WTC11 (cell line): ENCODE measurements at regions of chr15 and their contacts with region 1.

Region 1: GRCh38 chr15:68650901-68651709 is 72.3 kb downstream of the CORO2B start:
- DNase-seq: peak; percentile 98
- ATAC-seq: peak; percentile 96
- H3K4me3 Mint-ChIP-seq: peak overlapping the region; percentile 53
- H3K27ac Mint-ChIP-seq: no peak overlapping the region; the same call in 1 of the 2 replicates
- H3K4me1 Mint-ChIP-seq: peaks cover 43% of the 10 kb centered on the region
- H3K27me3 Mint-ChIP-seq: no peaks in the 10 kb centered on the region
- CTCF ChIP-seq: peak; percentile 97

Region 2: GRCh38 chr15:68559345-68560310 is 91.5 kb before region 1 on chr15:
- CTCF ChIA-PET with region 1: interaction called, 51 read pairs
- POLR2A ChIA-PET with region 1: no interaction called
- DNase-seq: peak; percentile 89
- ATAC-seq: peak; percentile 85
- H3K4me3 Mint-ChIP-seq: peak overlapping the region; percentile 94
- H3K27ac Mint-ChIP-seq: peak overlapping the region; percentile 72
- H3K4me1 Mint-ChIP-seq: peaks cover 29% of the 10 kb centered on the region
- H3K27me3 Mint-ChIP-seq: peaks cover 20% of the 10 kb centered on the region
- CTCF ChIP-seq: peak; percentile 91

Region 3: GRCh38 chr15:68608206-68608843 is 42.8 kb before region 1 on chr15:
- CTCF ChIA-PET with region 1: interaction called, 11 read pairs
- POLR2A ChIA-PET with region 1: no interaction called
- DNase-seq: no peak
- ATAC-seq: peak; percentile 80
- H3K4me3 Mint-ChIP-seq: no peak overlapping the region
- H3K27ac Mint-ChIP-seq: no peak overlapping the region
- H3K4me1 Mint-ChIP-seq: peaks cover 36% of the 10 kb centered on the region
- H3K27me3 Mint-ChIP-seq: peaks cover 2% of the 10 kb centered on the region; the same call in 1 of the 2 replicates
- CTCF ChIP-seq: no peak

Region 4: DNA sequence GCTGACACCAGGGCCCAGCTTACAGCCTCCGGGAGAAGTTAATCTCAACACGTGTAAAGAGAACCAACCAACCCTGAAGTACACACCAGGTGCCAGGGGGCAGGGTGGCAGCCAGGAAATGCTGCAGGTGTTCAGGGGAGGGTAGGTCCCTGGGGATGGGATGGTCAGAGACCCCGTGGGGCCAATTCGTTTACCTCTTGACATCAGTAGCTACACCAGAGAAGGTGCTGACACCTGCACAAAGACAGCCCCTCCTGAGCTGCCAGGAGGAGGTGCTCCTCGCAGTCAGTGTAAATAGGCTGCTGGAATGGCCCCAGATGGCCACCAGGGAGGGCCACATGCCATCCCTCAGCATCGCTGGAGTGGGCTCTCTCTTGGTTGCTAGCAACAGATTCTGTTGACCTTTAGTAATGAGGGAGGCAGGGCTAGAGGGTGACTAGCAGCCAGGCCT is 19.5 kb before region 1 on chr15:
- CTCF ChIA-PET with region 1: interaction called, 38 read pairs
- POLR2A ChIA-PET with region 1: no interaction called
- DNase-seq: peak; percentile 63
- ATAC-seq: peak; percentile 85
- H3K4me3 Mint-ChIP-seq: no peak overlapping the region
- H3K27ac Mint-ChIP-seq: no peak overlapping the region
- H3K4me1 Mint-ChIP-seq: peaks cover 24% of the 10 kb centered on the region
- H3K27me3 Mint-ChIP-seq: no peaks in the 10 kb centered on the region
- CTCF ChIP-seq: no peak

Region 5: GRCh38 chr15:68666120-68666811 is 15.2 kb after region 1 on chr15:
- CTCF ChIA-PET with region 1: interaction called, 120 read pairs
- POLR2A ChIA-PET with region 1: interaction called, 3 read pairs
- DNase-seq: peak; percentile 24
- ATAC-seq: peak; percentile 93
- H3K4me3 Mint-ChIP-seq: no peak overlapping the region
- H3K27ac Mint-ChIP-seq: no peak overlapping the region; the same call in none of the 2 replicates
- H3K4me1 Mint-ChIP-seq: peaks cover 18% of the 10 kb centered on the region
- H3K27me3 Mint-ChIP-seq: no peaks in the 10 kb centered on the region; the same call in 1 of the 2 replicates
- CTCF ChIP-seq: no peak

Region 6: DNA sequence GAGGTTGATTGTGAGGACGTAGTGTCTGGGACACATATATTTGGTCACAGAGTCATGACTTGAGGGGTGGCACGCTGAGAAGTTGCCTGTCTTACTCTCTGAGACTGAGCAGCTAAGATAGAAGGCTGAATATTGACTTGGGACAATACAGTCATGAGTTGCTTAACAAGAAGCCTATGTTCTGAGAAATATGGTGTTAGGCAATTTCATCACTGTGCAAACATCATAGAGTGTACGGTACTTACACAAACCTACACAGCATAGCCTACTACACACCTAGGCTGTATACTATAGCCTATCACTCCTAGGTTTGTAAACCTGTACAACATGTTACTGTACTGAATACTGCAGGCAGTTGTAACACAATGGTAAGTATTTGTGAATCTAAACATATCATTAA is 248.9 kb after region 1 on chr15:
- CTCF ChIA-PET with region 1: no interaction called
- POLR2A ChIA-PET with region 1: no interaction called
- DNase-seq: no peak
- ATAC-seq: no peak
- H3K4me3 Mint-ChIP-seq: no peak overlapping the region
- H3K27ac Mint-ChIP-seq: no peak overlapping the region
- H3K4me1 Mint-ChIP-seq: 0 out of 2 replicates have a peak, but pooled peaks cover 4% of the 10 kb centered on the region
- H3K27me3 Mint-ChIP-seq: no peaks in the 10 kb centered on the region; the same call in none of the 2 replicates
- CTCF ChIP-seq: no peak